HepG2 (cell line): ENCODE measurements at regions of chr3 and their contacts with region 1.

Region 1: DNA sequence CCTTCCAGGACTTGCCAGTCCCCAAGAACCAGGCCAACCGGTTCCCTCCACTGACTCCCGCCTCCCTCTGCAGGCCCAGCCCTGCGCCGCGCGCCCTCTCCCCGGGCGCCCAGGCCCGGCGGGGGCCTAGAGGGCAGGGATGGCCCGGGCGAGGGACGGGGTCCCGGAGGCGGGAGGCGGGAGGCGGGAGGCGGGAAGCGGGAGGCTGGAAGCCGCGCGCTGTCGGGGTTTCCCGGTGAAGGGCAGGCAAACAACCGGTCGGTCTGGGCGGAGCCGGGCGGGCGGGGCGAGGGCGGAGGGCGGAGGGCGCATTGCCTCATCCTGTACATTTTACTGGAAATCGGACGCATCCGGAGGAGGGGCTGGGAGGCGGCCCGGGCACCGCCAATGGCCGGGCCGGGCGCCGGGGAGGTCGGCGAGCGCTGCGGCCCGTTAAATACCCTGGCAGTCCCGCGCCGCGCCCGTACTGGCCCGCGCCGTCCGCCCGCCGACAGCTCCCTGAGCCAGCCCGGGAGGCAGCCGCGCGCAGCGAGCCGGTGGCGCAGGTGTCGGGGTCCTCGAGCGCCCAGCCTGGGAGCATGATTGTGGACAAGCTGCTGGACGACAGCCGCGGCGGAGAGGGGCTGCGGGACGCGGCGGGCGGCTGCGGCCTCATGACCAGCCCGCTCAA is at the start of gene NFKBIZ:
- DNase-seq: peak; percentile 85
- ATAC-seq: peak; percentile 90
- H3K4me3 ChIP-seq: peak within 1 kb of the TSS; percentile 87 to 96 (median 95)
- H3K27ac ChIP-seq: peak within 1 kb of the TSS; percentile 98
- H3K4me1 ChIP-seq: peaks cover 54% of the 10 kb centered on the region
- H3K27me3 ChIP-seq: no peaks in the 10 kb centered on the region; a peak in 1 of 5 replicates
- CTCF ChIP-seq: no peak
- EP300 ChIP-seq: peak in 1 of 2 experiments; percentile 68; a peak in 3 of 4 replicates
- POLR2A ChIP-seq: peak; percentile 98 to 99
- RAD21 ChIP-seq: peak; percentile 67
- total RNA-seq, gene NFKBIZ: 5.5 and 25.9 TPM in 2 replicates

Region 2: GRCh38 chr3:101643861-101644613 is 205.1 kb before region 1 on chr3:
- CTCF ChIA-PET with region 1: no interaction called
- POLR2A ChIA-PET with region 1: no interaction called
- in situ Hi-C with region 1: no loop called
- intact Hi-C with region 1: no loop called
- DNase-seq: no peak
- ATAC-seq: no peak
- H3K4me3 ChIP-seq: no peak overlapping the region
- H3K27ac ChIP-seq: no peak overlapping the region
- H3K4me1 ChIP-seq: no peaks in the 10 kb centered on the region
- H3K27me3 ChIP-seq: no peaks in the 10 kb centered on the region
- CTCF ChIP-seq: no peak
- EP300 ChIP-seq: no peak
- POLR2A ChIP-seq: no peak
- RAD21 ChIP-seq: no peak

Region 3: DNA sequence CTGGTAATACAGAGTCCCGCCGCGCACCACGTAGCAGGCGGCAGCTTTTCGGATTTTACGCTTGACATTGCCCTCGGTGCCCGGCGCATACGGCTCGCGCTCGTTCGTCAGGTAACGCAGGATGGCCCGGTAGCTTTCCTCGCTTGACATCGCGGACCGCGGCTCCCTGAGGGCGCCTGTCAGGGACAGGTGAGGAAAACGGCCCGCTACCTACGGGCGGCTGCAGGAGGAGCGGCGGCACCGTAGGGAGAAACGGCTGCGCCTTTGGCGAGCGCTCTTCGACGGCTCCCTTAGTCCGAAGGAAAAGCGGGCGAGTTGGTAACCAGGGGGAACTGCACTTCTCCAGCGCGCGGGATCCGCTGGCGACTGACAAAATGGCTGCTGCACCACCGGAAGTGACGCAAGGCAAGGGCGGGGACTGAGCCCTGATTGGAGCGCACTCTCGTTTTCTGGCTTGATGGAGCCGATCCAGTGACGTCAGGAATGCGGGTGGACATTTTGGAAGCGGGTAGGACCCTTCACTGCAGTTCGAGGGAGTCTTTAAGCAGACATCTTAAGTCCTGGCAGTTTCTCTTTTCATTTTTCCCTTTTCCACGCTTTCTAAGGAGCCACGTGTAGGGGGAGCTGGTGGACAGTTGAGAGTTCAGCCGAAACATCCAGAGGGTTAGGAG is 172.3 kb before region 1 on chr3 and contains the start of gene ZBTB11:
- CTCF ChIA-PET with region 1: no interaction called
- POLR2A ChIA-PET with region 1: interaction called, 7 read pairs
- in situ Hi-C with region 1: no loop called
- intact Hi-C with region 1: loop called (anchors 2 kb)
- DNase-seq: peak; percentile 99
- ATAC-seq: peak; percentile 81
- H3K4me3 ChIP-seq: peak within 1 kb of the TSS; percentile 85 to 94 (median 92)
- H3K27ac ChIP-seq: peak within 1 kb of the TSS; percentile 91
- H3K4me1 ChIP-seq: peaks cover 47% of the 10 kb centered on the region
- H3K27me3 ChIP-seq: no peaks in the 10 kb centered on the region
- CTCF ChIP-seq: peak; percentile 71
- EP300 ChIP-seq: no peak
- POLR2A ChIP-seq: peak; percentile 48 to 78
- RAD21 ChIP-seq: no peak; the same call in 1 of the 2 replicates
- total RNA-seq, gene ZBTB11: 18.1 and 24.6 TPM in 2 replicates

Region 4: DNA sequence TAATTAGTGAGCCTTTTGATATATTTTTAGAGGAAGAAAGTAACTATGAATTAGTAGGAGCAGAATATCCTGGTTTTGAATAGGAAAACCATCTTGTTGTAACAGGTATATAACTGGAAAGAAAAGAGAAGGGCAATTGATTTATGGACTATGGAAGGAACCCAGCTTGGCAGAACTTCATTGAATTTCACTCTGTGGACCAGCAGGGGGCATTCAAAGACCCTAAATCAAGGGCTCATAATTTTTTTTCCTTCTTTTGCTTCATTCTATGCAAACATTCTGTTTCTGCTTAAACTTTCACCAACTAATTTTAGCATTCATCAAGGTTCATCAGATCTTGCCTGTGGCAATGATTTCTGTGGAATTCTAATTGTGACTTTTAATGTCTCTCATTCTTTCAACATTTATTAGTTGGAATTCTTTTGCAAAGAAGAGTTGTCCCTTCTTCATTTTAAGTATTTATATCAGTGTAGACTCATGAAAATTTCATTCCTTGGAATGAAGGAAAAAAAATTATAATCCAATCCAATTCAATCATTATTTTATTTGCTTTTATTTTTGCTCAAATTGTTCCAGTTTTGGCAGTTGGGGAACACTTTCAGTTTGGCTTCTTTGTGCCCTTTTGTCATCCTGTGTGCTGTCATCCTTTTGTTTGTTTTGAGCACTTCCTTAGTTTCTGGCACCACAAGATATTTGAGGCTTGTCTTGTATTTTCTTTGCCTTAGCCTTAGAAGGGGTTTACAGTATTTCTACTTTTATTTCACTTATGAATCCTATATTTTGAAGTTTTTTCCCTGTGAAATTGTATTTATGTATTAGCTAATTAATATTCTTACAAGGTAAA is 39.8 kb before region 1 on chr3:
- CTCF ChIA-PET with region 1: no interaction called
- POLR2A ChIA-PET with region 1: interaction called, 6 read pairs
- in situ Hi-C with region 1: no loop called
- intact Hi-C with region 1: loop called (anchors 5 kb)
- DNase-seq: peak; percentile 29
- ATAC-seq: peak; percentile 66
- H3K4me3 ChIP-seq: no peak overlapping the region
- H3K27ac ChIP-seq: no peak overlapping the region
- H3K4me1 ChIP-seq: peaks cover 23% of the 10 kb centered on the region
- H3K27me3 ChIP-seq: no peaks in the 10 kb centered on the region
- CTCF ChIP-seq: peak; percentile 71
- EP300 ChIP-seq: no peak
- POLR2A ChIP-seq: no peak
- RAD21 ChIP-seq: peak; percentile 57

Region 5: GRCh38 chr3:101827211-101828174 is 21.7 kb before region 1 on chr3:
- CTCF ChIA-PET with region 1: no interaction called
- POLR2A ChIA-PET with region 1: interaction called, 32 read pairs
- in situ Hi-C with region 1: no loop called
- intact Hi-C with region 1: loop called (anchors 1 kb)
- DNase-seq: peak; percentile 59
- ATAC-seq: peak; percentile 95
- H3K4me3 ChIP-seq: peak overlapping the region; percentile 57 to 73 (median 59)
- H3K27ac ChIP-seq: peak overlapping the region; percentile 64
- H3K4me1 ChIP-seq: peaks cover 29% of the 10 kb centered on the region
- H3K27me3 ChIP-seq: no peaks in the 10 kb centered on the region
- CTCF ChIP-seq: no peak
- EP300 ChIP-seq: 0 out of 4 replicates have a peak, but pooled peaks of 1 of the 2 experiments have one; percentile 3
- POLR2A ChIP-seq: no peak; a peak in 2 of 4 replicates
- RAD21 ChIP-seq: no peak

Region 6: GRCh38 chr3:101838691-101839090 is 10.5 kb before region 1 on chr3:
- CTCF ChIA-PET with region 1: no interaction called
- POLR2A ChIA-PET with region 1: interaction called, 12 read pairs
- in situ Hi-C with region 1: no loop called
- intact Hi-C with region 1: no loop called
- DNase-seq: no peak
- ATAC-seq: no peak
- H3K4me3 ChIP-seq: no peak overlapping the region
- H3K27ac ChIP-seq: no peak overlapping the region
- H3K4me1 ChIP-seq: peaks cover 6% of the 10 kb centered on the region; the same call in 1 of the 2 replicates
- H3K27me3 ChIP-seq: no peaks in the 10 kb centered on the region
- CTCF ChIP-seq: no peak
- EP300 ChIP-seq: no peak
- POLR2A ChIP-seq: no peak
- RAD21 ChIP-seq: no peak

Region 7: DNA sequence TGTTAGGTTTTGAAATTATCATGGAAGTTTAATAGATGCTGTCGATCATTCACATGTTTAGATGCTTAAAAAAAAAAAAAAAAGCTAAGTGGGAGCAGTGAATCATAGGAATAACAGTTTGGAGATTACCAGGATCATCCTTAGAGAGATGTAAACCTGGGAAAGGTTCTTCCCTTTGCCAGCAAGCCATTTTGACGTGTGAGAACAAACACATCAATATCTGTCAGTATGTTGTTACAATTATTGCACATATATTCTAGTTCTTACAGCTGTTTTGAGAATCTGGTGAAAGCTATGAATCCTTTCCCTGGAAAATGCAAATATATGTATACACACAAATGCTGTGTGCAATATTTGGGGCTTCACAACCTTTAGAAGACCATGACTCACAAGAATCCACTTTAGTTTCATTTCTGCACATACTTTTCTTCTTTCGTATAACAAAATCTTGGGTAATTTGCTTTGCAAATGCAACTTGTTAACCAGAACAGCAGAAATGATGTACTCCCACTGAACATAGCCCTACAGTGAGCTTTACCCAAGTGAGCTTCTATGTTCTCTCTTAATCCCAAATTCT is 12.1 kb after region 1 on chr3:
- CTCF ChIA-PET with region 1: no interaction called
- POLR2A ChIA-PET with region 1: interaction called, 18 read pairs
- in situ Hi-C with region 1: no loop called
- intact Hi-C with region 1: no loop called
- DNase-seq: no peak
- ATAC-seq: no peak
- H3K4me3 ChIP-seq: no peak overlapping the region
- H3K27ac ChIP-seq: no peak overlapping the region
- H3K4me1 ChIP-seq: peaks cover 20% of the 10 kb centered on the region
- H3K27me3 ChIP-seq: no peaks in the 10 kb centered on the region
- CTCF ChIP-seq: no peak
- EP300 ChIP-seq: no peak
- POLR2A ChIP-seq: no peak
- RAD21 ChIP-seq: no peak

Region 8: DNA sequence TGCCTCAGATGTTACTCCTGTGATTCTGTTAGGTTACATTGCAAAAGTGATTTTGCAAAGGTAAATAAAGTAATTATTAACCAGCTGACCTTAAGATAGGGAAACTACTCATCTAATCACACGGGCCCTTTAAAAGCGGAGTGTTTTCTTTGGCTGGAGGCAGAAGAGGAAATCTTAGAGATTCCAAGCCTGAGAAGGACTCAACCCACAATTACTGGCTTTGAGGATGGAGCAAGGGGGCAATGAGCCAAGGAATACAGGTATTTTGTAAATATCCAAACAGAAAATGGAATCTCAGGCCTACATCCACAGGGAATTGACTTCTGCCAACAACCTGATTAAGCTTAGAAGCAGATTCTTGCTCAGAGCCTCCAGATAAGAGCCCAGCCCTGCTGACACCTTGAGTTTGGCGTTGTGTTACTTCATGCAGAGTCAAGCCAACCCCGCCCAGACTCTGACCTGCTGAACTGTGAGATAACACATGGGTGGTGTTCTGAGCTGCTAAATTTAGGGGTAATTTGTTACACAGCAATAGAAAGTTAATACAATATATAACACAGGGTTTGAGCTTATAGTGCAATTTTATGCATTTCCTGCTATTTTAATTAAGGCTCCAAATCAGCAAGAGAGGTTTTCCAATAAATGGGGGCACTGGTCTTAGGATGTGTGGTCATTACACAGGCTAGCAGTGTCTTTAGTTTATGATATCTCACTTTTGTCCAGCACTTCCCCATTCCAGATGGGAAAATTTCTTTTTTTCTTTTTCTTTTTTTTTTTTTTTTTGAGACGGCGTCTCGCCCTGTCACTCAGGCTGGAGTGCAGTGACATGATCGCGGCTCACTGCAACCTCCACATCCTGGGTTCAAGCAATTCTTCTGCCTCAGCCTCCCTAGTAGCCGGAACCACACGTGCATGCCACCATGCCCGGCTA is 19.6 kb after region 1 on chr3:
- CTCF ChIA-PET with region 1: no interaction called
- POLR2A ChIA-PET with region 1: interaction called, 18 read pairs
- in situ Hi-C with region 1: no loop called
- intact Hi-C with region 1: no loop called
- DNase-seq: no peak
- ATAC-seq: peak; percentile 19
- H3K4me3 ChIP-seq: no peak overlapping the region; a peak in 1 of 6 replicates
- H3K27ac ChIP-seq: no peak overlapping the region
- H3K4me1 ChIP-seq: peaks cover 39% of the 10 kb centered on the region
- H3K27me3 ChIP-seq: no peaks in the 10 kb centered on the region; a peak in 1 of 5 replicates
- CTCF ChIP-seq: no peak
- EP300 ChIP-seq: no peak
- POLR2A ChIP-seq: no peak
- RAD21 ChIP-seq: no peak

Region 9: DNA sequence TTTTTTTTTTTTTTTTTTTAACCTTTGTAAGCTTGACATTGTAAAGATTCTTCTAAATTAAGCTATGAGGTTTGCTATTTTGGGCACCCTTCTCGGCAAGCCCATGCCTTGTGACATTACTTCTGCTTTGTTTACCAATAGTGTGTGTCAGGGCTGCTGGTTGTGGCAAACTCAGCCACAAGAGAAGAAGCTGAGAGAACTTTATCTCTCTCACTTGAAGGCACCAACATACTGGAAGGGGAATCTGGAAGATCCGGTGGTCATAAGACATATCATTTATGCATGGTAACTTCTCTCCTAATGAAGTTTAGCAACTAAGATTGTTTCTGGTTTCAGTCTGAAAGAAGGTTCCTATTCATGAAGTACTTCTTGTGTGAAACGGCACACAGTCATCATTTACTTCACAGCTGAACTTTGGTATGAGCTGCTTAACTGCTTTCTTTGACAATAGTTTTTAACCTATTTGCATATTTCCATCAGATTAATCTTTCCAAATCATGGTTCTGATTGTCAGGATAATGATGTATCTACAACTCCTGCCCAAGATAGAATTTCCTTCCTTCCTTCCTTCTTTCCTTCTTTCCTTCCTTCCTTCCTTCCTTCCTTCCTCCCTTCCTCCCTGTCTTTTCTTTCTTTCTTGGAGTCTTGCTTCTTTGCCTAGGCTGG is 189.4 kb after region 1 on chr3:
- CTCF ChIA-PET with region 1: no interaction called
- POLR2A ChIA-PET with region 1: no interaction called
- in situ Hi-C with region 1: no loop called
- intact Hi-C with region 1: no loop called
- DNase-seq: no peak
- ATAC-seq: no peak
- H3K4me3 ChIP-seq: no peak overlapping the region
- H3K27ac ChIP-seq: no peak overlapping the region
- H3K4me1 ChIP-seq: no peaks in the 10 kb centered on the region
- H3K27me3 ChIP-seq: no peaks in the 10 kb centered on the region
- CTCF ChIP-seq: no peak
- EP300 ChIP-seq: no peak
- POLR2A ChIP-seq: no peak
- RAD21 ChIP-seq: no peak

Region 10: GRCh38 chr3:102129760-102130608 is 280.8 kb after region 1 on chr3:
- CTCF ChIA-PET with region 1: no interaction called
- POLR2A ChIA-PET with region 1: no interaction called
- in situ Hi-C with region 1: no loop called
- intact Hi-C with region 1: no loop called
- DNase-seq: no peak
- ATAC-seq: no peak
- H3K4me3 ChIP-seq: no peak overlapping the region
- H3K27ac ChIP-seq: no peak overlapping the region
- H3K4me1 ChIP-seq: no peaks in the 10 kb centered on the region
- H3K27me3 ChIP-seq: no peaks in the 10 kb centered on the region
- CTCF ChIP-seq: no peak
- EP300 ChIP-seq: no peak
- POLR2A ChIP-seq: no peak
- RAD21 ChIP-seq: no peak